Heart left ventricle (tissue), 16 donors: ENCODE measurements at regions of chr16 and their contacts with region 1.

Region 1: DNA sequence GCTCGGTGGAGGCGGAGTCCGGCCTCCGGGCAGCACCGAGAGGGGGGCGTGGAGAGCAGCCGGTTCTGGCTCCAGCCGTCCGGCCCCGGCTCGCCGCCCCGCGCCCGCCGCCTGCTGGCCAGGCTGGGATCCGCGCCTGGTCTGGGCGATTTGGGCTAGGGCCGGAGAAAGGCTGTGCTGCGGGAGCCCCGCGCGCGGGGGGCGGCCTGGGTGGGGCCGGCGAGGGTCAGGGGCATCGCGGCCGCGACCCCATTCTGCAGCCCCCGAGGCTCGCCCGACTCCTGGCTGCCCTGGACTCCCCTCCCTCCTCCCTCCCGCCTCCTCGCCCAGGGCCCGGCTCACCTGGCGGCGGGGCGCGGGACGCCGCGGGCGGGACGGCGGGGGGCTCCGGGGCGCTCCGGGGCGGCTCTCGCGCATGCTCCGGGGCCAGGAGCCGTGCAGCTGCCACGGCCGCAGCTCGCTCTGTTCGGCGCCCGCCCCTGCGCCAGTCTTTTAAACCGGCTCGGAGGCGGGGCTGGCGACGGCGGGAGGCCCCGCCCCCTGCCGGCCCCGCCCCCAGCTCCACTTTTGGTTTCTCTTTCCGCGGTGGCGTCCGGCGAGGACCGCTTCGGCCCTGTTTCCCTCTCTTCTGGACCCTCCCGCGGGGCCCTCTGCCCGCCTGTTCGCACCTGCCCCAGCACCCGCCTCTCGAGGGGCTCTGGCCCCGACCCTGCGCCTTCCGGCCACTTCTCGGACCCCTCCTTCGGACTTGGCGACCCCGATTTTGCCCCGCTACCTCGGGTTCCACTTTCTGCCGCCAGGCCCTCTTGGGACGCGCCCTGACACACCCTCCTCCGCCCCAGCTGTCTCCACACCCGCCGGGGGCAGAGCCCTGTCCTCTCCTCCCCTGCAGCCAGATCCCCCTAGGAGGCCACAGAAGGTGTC is at the start of gene SOCS1:
- DNase-seq: peak; percentile 86 to 93 (median 89)
- ATAC-seq: peak; percentile 48 to 83 (median 82)
- H3K4me3 ChIP-seq: peak within 1 kb of the TSS; percentile 63 to 94 (median 82)
- H3K27ac ChIP-seq: peak within 1 kb of the TSS; percentile 90 to 100 (median 98)
- H3K4me1 ChIP-seq: peaks cover 0 to 59% (median 36%) of the 10 kb centered on the region in 12 donors
- H3K27me3 ChIP-seq: no peaks in the 10 kb centered on the region
- CTCF ChIP-seq: peak; percentile 68 to 97 (median 91)
- POLR2A ChIP-seq: peak; percentile 92 to 97
- total RNA-seq, gene SOCS1: 0.63 to 14.8 (median 2.7) TPM

Region 2: GRCh38 chr16:10743610-10744393 is 512.2 kb before region 1 on chr16 and contains the start of gene NUBP1:
- intact Hi-C with region 1: loop called in 1 of 10 experiments (anchors 10 kb)
- DNase-seq: peak; percentile 99
- ATAC-seq: peak; percentile 96 to 97 (median 97)
- H3K4me3 ChIP-seq: peak within 1 kb of the TSS; percentile 18 to 82 (median 64)
- H3K27ac ChIP-seq: peak within 1 kb of the TSS; percentile 95 to 100 (median 98)
- H3K4me1 ChIP-seq: peaks cover 5 to 43% (median 28%) of the 10 kb centered on the region in 12 donors
- H3K27me3 ChIP-seq: no peaks in the 10 kb centered on the region
- CTCF ChIP-seq: peak in 1 of 12 donors; percentile 7
- POLR2A ChIP-seq: peak; percentile 93 to 98
- total RNA-seq, gene NUBP1: 34.0 to 54.8 (median 47.9) TPM

Region 3: DNA sequence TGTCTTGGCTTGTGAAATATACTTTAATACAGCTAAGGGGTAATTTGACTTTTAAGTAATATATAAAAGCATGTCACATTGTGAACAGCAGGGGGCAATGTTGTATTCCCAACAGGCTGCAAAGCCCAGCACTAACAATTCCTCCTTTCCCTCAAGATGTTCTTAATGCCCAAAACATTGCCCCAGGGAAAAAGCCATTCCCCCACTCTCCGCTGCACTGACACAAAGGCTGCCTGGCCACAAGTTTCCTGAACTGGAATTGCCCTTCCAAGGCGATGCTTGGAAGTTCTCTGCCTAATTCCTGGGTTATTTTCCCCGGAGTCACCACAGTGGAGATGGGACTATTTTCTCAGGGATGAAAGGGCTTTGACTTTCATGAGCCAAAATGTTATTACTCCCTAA is 284.4 kb before region 1 on chr16:
- intact Hi-C with region 1: loop called (anchors 1 to 5 kb)
- DNase-seq: peak in 4 of 5 donors; percentile 29 to 48 (median 42)
- ATAC-seq: peak in 3 of 4 donors; percentile 51 to 72 (median 52)
- H3K4me3 ChIP-seq: no peak overlapping the region
- H3K27ac ChIP-seq: peak overlapping the region in 1 of 12 donors; percentile 5
- H3K4me1 ChIP-seq: peaks cover 0 to 27% (median 12%) of the 10 kb centered on the region in 12 donors
- H3K27me3 ChIP-seq: no peaks in the 10 kb centered on the region
- CTCF ChIP-seq: peak; percentile 70 to 87 (median 79)
- POLR2A ChIP-seq: no peak

Region 4: GRCh38 chr16:11105038-11105903 is 150.7 kb before region 1 on chr16:
- intact Hi-C with region 1: loop called in 7 of 10 experiments (anchors 1 to 10 kb)
- DNase-seq: no peak
- ATAC-seq: peak; percentile 15 to 79 (median 54)
- H3K4me3 ChIP-seq: no peak overlapping the region
- H3K27ac ChIP-seq: peak overlapping the region in 7 of 12 donors; percentile 20 to 78 (median 45)
- H3K4me1 ChIP-seq: peaks cover 9 to 64% (median 44%) of the 10 kb centered on the region in 12 donors
- H3K27me3 ChIP-seq: no peaks in the 10 kb centered on the region
- CTCF ChIP-seq: no peak
- POLR2A ChIP-seq: no peak

Region 5: GRCh38 chr16:11164482-11165270 is 91.3 kb before region 1 on chr16:
- intact Hi-C with region 1: loop called in 1 of 10 experiments (anchors 10 kb)
- DNase-seq: peak in 1 of 5 donors; percentile 11
- ATAC-seq: no peak
- H3K4me3 ChIP-seq: no peak overlapping the region
- H3K27ac ChIP-seq: no peak overlapping the region
- H3K4me1 ChIP-seq: peaks cover 0 to 40% (median 22%) of the 10 kb centered on the region in 12 donors
- H3K27me3 ChIP-seq: no peaks in the 10 kb centered on the region
- CTCF ChIP-seq: no peak
- POLR2A ChIP-seq: no peak

Region 6: GRCh38 chr16:11297492-11298142 is 41.6 kb after region 1 on chr16:
- intact Hi-C with region 1: loop called in 2 of 10 experiments (anchors 5 kb)
- DNase-seq: peak; percentile 68 to 88 (median 78)
- ATAC-seq: peak; percentile 95 to 98 (median 96)
- H3K4me3 ChIP-seq: peak overlapping the region in 8 of 12 donors; percentile 4 to 38 (median 22)
- H3K27ac ChIP-seq: peak overlapping the region in 10 of 12 donors; percentile 53 to 70 (median 60)
- H3K4me1 ChIP-seq: peaks cover 0 to 23% (median 13%) of the 10 kb centered on the region in 12 donors
- H3K27me3 ChIP-seq: no peaks in the 10 kb centered on the region
- CTCF ChIP-seq: peak in 5 of 12 donors; percentile 16 to 47 (median 38)
- POLR2A ChIP-seq: no peak